ENCODE measurements at regions of chr22 and their contacts with region 1.

Region 1: DNA sequence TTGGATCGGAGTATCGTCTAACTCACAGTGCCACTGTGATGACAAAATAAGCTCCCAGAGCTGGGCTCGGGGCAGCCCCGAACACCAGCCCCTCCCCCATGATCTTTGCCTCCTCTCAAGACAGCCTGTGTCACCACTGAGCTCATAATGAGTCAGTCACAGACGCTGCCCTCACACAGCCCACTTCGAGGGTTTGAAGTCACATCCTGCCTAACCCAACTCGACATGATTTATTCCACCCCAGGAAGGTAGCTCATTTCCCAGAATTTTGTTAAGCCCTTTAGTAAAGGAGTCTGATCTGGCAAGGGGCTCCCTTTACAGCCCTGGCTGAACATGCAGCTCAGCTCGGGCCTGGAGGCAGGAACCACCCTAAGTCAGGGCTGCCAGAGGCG is 22.8 kb downstream of the MYH9 start:
- DNase-seq: no peak
- H3K4me3 ChIP-seq: no peak overlapping the region
- H3K27ac ChIP-seq: 0 out of 2 replicates have a peak overlapping the region, but pooled peaks have one; percentile 21
- H3K4me1 ChIP-seq: peaks cover 48 to 71% (median 61%) of the 10 kb centered on the region in 4 experiments
- H3K27me3 ChIP-seq: no peaks in the 10 kb centered on the region
- CTCF ChIP-seq: no peak
- EP300 ChIP-seq: no peak
- POLR2A ChIP-seq: no peak
- RAD21 ChIP-seq: no peak

Region 2: GRCh38 chr22:36081023-36081431 is 284.0 kb before region 1 on chr22:
- CTCF ChIA-PET with region 1: no interaction called
- POLR2A ChIA-PET with region 1: no interaction called
- DNase-seq: no peak
- H3K4me3 ChIP-seq: no peak overlapping the region
- H3K27ac ChIP-seq: no peak overlapping the region
- H3K4me1 ChIP-seq: peaks cover 0 to 4% (median 0%) of the 10 kb centered on the region in 4 experiments; a peak in 2 of 7 replicates
- H3K27me3 ChIP-seq: no peaks in the 10 kb centered on the region
- CTCF ChIP-seq: no peak
- EP300 ChIP-seq: no peak
- POLR2A ChIP-seq: no peak
- RAD21 ChIP-seq: no peak

Region 3: DNA sequence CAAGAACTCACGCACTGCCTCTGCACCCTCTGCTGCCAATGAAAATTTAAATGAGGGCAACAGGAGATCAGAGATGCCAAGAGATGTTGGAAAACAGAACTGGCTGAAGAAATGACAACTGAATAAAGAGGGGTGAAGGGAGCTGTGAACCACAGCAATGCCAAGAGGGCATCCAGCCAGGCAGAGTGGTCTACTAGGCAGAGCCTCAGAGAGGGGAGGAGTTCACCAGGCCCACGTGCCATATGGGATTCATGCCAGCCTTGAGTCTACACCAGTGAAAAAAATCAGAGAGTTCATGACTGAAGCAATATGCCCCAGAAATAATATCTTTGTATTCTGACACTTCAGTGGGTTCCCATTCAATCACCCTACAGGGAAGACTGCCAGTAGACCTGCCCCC is 130.1 kb before region 1 on chr22:
- CTCF ChIA-PET with region 1: no interaction called
- POLR2A ChIA-PET with region 1: no interaction called
- DNase-seq: no peak
- H3K4me3 ChIP-seq: no peak overlapping the region
- H3K27ac ChIP-seq: no peak overlapping the region
- H3K4me1 ChIP-seq: peaks cover 0 to 16% (median 9%) of the 10 kb centered on the region in 4 experiments; a peak in 6 of 7 replicates
- H3K27me3 ChIP-seq: no peaks in the 10 kb centered on the region
- CTCF ChIP-seq: no peak
- EP300 ChIP-seq: no peak
- POLR2A ChIP-seq: no peak
- RAD21 ChIP-seq: no peak

Region 4: DNA sequence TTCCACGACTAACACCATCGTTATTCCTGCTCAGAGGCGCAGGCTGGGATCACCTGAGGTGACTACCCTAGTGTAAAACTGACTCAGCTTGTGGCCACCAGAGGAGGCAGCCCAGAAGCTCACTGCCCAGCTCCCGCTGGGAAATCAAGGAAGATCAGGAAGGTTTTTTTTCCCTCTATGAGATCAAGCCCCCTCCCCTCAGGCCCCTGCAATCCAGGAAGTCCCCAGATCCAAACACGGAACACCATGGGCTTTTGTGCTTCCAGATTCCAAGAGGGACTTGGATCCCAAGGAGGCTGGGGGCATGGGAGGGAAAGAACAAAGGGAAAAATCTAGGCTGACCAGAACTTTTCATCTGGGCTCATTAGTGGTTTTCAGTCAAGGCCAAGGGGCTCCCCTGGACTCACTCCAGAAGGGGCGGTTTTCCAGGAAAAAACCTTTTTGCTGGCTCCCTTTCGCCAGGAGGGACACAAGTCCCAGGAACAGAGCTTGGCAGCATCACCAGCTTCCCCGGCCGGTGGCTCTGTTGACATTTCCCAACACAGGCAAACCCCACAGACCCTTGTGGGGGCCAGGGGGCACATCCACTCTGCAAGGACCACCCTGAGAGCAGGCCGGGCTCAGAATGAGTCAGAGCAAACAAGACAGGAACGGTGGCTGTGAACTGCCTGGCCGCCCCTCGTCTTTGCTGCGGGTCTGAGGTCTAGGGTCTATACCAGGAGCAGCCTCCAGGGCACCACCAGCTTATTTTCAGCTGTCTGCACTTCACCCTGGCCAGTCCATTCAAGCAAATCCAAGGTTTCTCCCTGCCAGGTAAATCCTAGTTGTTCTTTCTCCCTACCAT is 14.0 kb before region 1 on chr22:
- CTCF ChIA-PET with region 1: interaction called, 4 read pairs
- POLR2A ChIA-PET with region 1: interaction called, 13 read pairs
- DNase-seq: no peak
- H3K4me3 ChIP-seq: no peak overlapping the region
- H3K27ac ChIP-seq: no peak overlapping the region
- H3K4me1 ChIP-seq: peaks cover 5 to 25% (median 14%) of the 10 kb centered on the region in 4 experiments; a peak in 6 of 7 replicates
- H3K27me3 ChIP-seq: no peaks in the 10 kb centered on the region
- CTCF ChIP-seq: no peak
- EP300 ChIP-seq: no peak
- POLR2A ChIP-seq: no peak
- RAD21 ChIP-seq: peak in 1 of 2 experiments; percentile 18; a peak in 1 of 4 replicates

Region 5: DNA sequence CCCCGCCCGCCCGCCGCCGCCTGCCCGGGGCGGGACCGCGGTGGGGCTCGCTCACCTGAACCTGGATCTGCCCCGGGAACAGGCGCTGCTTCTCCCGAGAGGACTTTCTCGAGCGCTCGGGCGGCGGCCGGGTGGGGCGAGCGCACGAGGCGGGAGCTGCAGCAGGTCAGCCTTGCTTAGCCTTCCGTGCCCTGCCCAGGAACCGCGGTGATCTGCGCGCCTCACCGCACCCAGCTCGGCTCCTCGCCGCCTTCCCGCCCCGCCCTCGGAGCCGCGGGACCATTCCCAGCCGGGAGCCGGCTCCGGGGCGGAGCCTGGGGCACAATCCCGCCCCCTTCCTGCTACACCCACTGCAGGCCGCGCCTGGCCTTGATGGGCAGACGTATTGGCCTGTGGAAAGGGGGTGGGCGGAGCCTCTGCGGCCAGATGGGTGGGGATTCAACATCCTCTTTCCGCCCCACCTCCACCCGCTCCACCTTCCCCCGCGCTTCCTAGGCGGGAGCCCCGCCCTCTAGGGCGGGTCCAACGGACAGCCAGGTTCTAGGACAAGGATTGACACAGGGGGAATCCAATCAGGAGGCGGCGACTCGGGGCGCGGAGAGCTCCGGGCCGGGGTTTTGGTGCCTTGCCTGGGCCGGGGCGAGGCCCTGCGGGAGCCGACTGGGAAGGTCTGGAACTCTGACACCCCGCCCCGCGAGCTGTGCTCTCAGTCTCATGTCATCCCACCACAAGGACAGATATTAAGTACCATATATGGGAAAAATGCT is 22.9 kb after region 1 on chr22 and contains the start of gene MYH9:
- CTCF ChIA-PET with region 1: interaction called, 5 read pairs
- POLR2A ChIA-PET with region 1: interaction called, 263 read pairs
- DNase-seq: peak; percentile 99 to 100
- H3K4me3 ChIP-seq: peak within 1 kb of the TSS; percentile 52 to 98 (median 86)
- H3K27ac ChIP-seq: peak within 1 kb of the TSS; percentile 79; the same call in 1 of the 2 replicates
- H3K4me1 ChIP-seq: peaks cover 0 to 16% (median 5%) of the 10 kb centered on the region in 4 experiments; a peak in 6 of 7 replicates
- H3K27me3 ChIP-seq: no peaks in the 10 kb centered on the region
- CTCF ChIP-seq: no peak
- EP300 ChIP-seq: no peak
- POLR2A ChIP-seq: peak; percentile 94 to 95
- RAD21 ChIP-seq: no peak
- total RNA-seq, gene MYH9: 295 and 322 TPM in 2 replicates

Measured in H1 (cell line).